ENCODE measurements at regions of chr1 and their contacts with region 1.

Region 1: GRCh38 chr1:161192476-161193465 is 6.1 kb downstream of the ADAMTS4 start:
- DNase-seq: no peak

Region 2: DNA sequence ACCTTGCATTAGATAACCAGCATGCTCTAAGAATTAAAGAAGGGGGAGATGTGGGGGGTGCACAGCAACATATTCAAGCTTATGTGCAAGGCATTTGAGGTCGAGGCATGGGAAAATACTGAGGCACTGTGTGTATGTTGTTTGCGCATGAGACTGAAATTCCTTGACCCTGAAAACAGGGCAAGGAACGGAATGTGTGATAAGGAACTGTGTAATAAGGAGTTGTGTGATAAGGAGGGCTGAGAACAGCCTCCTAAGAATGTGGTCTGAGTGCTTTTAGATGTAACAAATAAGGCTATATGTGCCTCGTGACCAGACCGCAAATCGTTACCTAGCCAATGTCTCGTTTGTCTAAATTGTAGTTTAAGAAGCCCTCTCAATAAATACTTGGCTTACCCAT is 281.3 kb before region 1 on chr1:
- intact Hi-C with region 1: no loop called
- DNase-seq: no peak

Region 3: GRCh38 chr1:161045750-161046571 is 146.8 kb before region 1 on chr1 and contains the start of gene USF1:
- intact Hi-C with region 1: no loop called
- DNase-seq: peak; percentile 96
- total RNA-seq, gene USF1: 29.2 TPM

Region 4: GRCh38 chr1:161098210-161099068 is 94.3 kb before region 1 on chr1 and contains the start of gene KLHDC9:
- intact Hi-C with region 1: no loop called
- DNase-seq: peak; percentile 83
- total RNA-seq, gene KLHDC9: 10.7 TPM

Region 5: DNA sequence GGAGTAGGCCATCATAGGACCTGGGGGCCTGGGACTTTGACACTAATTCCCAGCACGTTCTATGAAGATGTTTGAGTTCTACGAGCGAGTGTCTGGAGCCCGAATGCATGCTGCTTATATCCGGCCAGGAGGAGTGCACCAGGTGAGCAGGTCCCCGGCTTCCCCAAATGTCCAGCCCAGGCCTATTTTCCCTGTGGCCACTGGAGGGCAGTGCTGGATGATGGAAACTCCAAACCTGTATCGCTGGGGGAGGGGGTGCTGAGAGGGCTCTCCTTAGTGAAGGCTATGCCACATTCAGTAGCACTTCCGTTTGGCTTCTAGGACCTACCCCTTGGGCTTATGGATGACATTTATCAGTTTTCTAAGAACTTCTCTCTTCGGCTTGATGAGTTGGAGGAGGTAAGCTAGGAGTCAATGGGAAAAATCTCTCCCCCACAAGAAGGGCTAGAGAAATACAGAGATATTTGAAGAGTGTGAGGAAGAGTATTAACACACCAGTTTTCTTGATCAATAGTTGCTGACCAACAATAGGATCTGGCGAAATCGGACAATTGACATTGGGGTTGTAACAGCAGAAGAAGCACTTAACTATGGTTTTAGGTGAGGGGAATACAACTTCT is 17.1 kb after region 1 on chr1:
- intact Hi-C with region 1: no loop called
- DNase-seq: peak; percentile 88

Region 6: DNA sequence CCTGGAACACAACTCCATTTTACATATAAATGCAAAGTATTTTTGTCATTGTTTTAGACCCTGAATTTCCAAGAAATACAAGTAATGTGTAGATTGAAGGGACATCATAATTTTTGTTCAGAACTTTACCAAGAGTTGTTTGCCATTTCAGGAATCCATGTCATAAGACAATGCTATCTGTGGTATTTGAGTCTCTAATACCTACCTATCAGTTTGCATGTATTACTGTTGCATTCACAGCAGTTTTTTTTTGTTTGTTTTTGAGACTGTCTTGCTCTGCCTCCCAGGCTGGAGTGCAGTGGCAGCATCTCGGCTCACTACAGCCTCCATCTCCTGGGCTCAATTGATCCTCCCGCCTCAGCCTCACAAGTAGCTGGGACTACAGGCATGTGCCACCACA is 99.9 kb after region 1 on chr1:
- intact Hi-C with region 1: loop called (anchors 5 kb)
- DNase-seq: no peak

Measured in cardiac septum (tissue), 1 donor.